GM12878 (cell line): ENCODE measurements at regions of chr2 and their contacts with region 1.

Region 1: GRCh38 chr2:176653479-176654443 is 384.5 kb downstream of the MTX2 start:
- DNase-seq: no peak
- ATAC-seq: peak; percentile 97
- H3K4me3 ChIP-seq: no peak overlapping the region
- H3K27ac ChIP-seq: no peak overlapping the region
- H3K4me1 ChIP-seq: no peaks in the 10 kb centered on the region
- H3K27me3 ChIP-seq: no peaks in the 10 kb centered on the region; a peak in 1 of 4 replicates
- CTCF ChIP-seq: peak; percentile 60 to 76 (median 62)
- EP300 ChIP-seq: no peak
- POLR2A ChIP-seq: no peak
- RAD21 ChIP-seq: peak; percentile 43

Region 2: DNA sequence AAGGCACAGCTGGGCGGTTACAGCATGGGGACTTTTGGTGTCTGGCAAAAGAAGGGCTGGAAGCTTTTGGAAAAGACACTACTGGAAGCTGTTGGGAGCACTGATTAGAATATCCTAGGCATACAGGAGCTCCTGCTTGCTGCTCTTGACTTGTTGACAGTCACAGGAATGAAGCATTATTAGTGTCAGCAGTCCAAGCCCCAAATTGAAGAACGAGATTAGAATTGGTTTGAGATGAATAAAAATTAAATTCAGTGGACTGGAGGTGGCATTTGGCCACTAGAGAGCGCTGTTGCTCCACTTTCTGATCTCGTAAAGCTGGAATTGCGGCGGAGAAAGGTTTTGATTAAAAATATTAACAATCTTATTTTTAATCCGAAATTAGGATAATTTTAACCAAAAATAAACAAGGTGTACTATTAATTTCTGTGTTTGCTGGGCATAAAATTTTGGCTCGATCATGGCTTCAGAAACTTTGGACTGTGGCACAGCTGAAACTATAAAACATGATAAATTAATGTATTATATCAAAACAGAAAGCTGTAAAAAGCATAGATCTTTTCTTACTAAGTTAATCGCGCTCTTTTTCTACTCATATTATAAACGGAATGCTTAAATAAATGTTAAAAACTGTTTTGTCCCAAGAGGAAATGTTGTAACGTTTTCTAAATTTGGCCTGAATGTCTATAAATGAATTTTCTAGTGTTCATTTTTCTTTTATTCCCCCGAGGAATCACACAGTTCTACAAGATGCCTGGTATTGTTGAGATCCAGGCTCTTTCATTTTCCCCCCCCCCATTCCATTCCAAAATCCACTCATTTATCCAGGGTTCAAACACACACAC is 526.6 kb before region 1 on chr2:
- CTCF ChIA-PET with region 1: interaction called, 79 read pairs
- POLR2A ChIA-PET with region 1: no interaction called
- RAD21 ChIA-PET with region 1: interaction called, 25 read pairs
- SMC1A ChIA-PET with region 1: interaction called, 37 read pairs
- in situ Hi-C with region 1: no loop called
- intact Hi-C with region 1: loop called (anchors 2 kb)
- DNase-seq: no peak
- ATAC-seq: peak; percentile 49; the same call in 2 of the 3 replicates
- H3K4me3 ChIP-seq: no peak overlapping the region
- H3K27ac ChIP-seq: no peak overlapping the region
- H3K4me1 ChIP-seq: no peaks in the 10 kb centered on the region
- H3K27me3 ChIP-seq: peaks cover 7 to 29% of the 10 kb centered on the region in 2 experiments
- CTCF ChIP-seq: peak; percentile 61 to 77 (median 66)
- EP300 ChIP-seq: no peak
- POLR2A ChIP-seq: no peak
- RAD21 ChIP-seq: peak; percentile 81

Region 3: GRCh38 chr2:176638167-176639015 is 15.4 kb before region 1 on chr2:
- CTCF ChIA-PET with region 1: interaction called, 83 read pairs
- POLR2A ChIA-PET with region 1: no interaction called
- RAD21 ChIA-PET with region 1: interaction called, 20 read pairs
- SMC1A ChIA-PET with region 1: interaction called, 79 read pairs
- in situ Hi-C with region 1: no loop called
- intact Hi-C with region 1: no loop called
- DNase-seq: no peak
- ATAC-seq: peak; percentile 93
- H3K4me3 ChIP-seq: peak overlapping the region; percentile 64
- H3K27ac ChIP-seq: no peak overlapping the region
- H3K4me1 ChIP-seq: no peaks in the 10 kb centered on the region
- H3K27me3 ChIP-seq: peaks cover 2 to 8% of the 10 kb centered on the region in 2 experiments
- CTCF ChIP-seq: peak; percentile 68 to 74 (median 70)
- EP300 ChIP-seq: no peak
- POLR2A ChIP-seq: no peak
- RAD21 ChIP-seq: peak; percentile 73

Region 4: GRCh38 chr2:176664478-176664877 is 10.7 kb after region 1 on chr2:
- CTCF ChIA-PET with region 1: interaction called, 56 read pairs
- POLR2A ChIA-PET with region 1: interaction called, 4 read pairs
- RAD21 ChIA-PET with region 1: interaction called, 43 read pairs
- SMC1A ChIA-PET with region 1: interaction called, 88 read pairs
- in situ Hi-C with region 1: no loop called
- intact Hi-C with region 1: no loop called
- DNase-seq: no peak
- ATAC-seq: no peak
- H3K4me3 ChIP-seq: no peak overlapping the region
- H3K27ac ChIP-seq: no peak overlapping the region
- H3K4me1 ChIP-seq: peaks cover 3% of the 10 kb centered on the region; the same call in 1 of the 2 replicates
- H3K27me3 ChIP-seq: no peaks in the 10 kb centered on the region
- CTCF ChIP-seq: no peak
- EP300 ChIP-seq: no peak
- POLR2A ChIP-seq: no peak
- RAD21 ChIP-seq: no peak

Region 5: DNA sequence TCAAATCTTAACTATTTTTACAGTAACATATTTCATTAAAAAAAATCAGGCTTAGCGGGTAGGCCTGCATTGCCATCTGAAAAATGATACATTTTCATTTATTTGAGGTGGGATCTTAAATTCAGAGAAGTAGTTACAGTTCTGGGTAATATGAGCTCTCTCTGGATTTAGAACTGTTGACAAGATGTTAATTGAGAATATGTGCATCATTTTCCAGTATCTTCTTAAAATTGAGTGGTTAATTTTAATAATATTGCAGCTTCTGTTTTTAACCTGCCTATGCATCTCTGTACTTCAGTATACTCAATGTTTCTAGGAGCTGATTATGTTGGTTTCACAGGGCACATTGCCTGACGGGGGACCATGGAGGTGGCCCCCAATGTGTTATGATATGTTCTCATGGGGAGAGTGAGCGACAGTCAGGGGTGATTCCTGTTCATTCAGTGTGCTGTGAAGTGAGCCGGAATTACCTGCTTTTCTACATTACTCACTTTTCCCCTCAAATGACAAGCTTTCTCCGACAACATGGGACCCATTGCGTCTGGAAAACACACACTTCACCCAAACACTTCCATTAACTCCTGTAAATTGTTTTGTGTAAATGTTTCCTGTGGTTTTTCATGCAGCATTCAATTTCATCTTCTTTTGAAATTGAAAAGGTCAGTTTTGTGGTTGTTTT is 21.6 kb after region 1 on chr2:
- CTCF ChIA-PET with region 1: interaction called, 23 read pairs
- POLR2A ChIA-PET with region 1: interaction called, 3 read pairs
- RAD21 ChIA-PET with region 1: interaction called, 43 read pairs
- SMC1A ChIA-PET with region 1: interaction called, 88 read pairs
- in situ Hi-C with region 1: no loop called
- intact Hi-C with region 1: no loop called
- DNase-seq: no peak
- ATAC-seq: no peak
- H3K4me3 ChIP-seq: no peak overlapping the region
- H3K27ac ChIP-seq: no peak overlapping the region
- H3K4me1 ChIP-seq: no peaks in the 10 kb centered on the region; the same call in 1 of the 2 replicates
- H3K27me3 ChIP-seq: no peaks in the 10 kb centered on the region
- CTCF ChIP-seq: no peak
- EP300 ChIP-seq: no peak
- POLR2A ChIP-seq: no peak
- RAD21 ChIP-seq: no peak

Region 6: GRCh38 chr2:176814306-176815052 is 160.7 kb after region 1 on chr2:
- CTCF ChIA-PET with region 1: interaction called, 145 read pairs
- POLR2A ChIA-PET with region 1: interaction called, 3 read pairs
- RAD21 ChIA-PET with region 1: interaction called, 62 read pairs
- SMC1A ChIA-PET with region 1: interaction called, 38 read pairs
- in situ Hi-C with region 1: loop called (anchors 10 kb)
- intact Hi-C with region 1: loop called (anchors 1 kb)
- DNase-seq: peak; percentile 8
- ATAC-seq: peak; percentile 80
- H3K4me3 ChIP-seq: no peak overlapping the region
- H3K27ac ChIP-seq: no peak overlapping the region
- H3K4me1 ChIP-seq: no peaks in the 10 kb centered on the region
- H3K27me3 ChIP-seq: no peaks in the 10 kb centered on the region
- CTCF ChIP-seq: peak; percentile 42 to 54 (median 48); a peak in 5 of 6 replicates
- EP300 ChIP-seq: no peak
- POLR2A ChIP-seq: no peak
- RAD21 ChIP-seq: peak; percentile 79

Region 7: GRCh38 chr2:176986487-176986886 is 332.7 kb after region 1 on chr2:
- CTCF ChIA-PET with region 1: no interaction called
- POLR2A ChIA-PET with region 1: no interaction called
- RAD21 ChIA-PET with region 1: no interaction called
- SMC1A ChIA-PET with region 1: no interaction called
- in situ Hi-C with region 1: no loop called
- intact Hi-C with region 1: no loop called
- DNase-seq: no peak
- ATAC-seq: no peak
- H3K4me3 ChIP-seq: no peak overlapping the region
- H3K27ac ChIP-seq: no peak overlapping the region
- H3K4me1 ChIP-seq: no peaks in the 10 kb centered on the region
- H3K27me3 ChIP-seq: no peaks in the 10 kb centered on the region
- CTCF ChIP-seq: no peak
- EP300 ChIP-seq: no peak
- POLR2A ChIP-seq: no peak
- RAD21 ChIP-seq: no peak